Heart left ventricle (tissue), 16 donors: ENCODE measurements at regions of chr7 and their contacts with region 1.

Region 1: DNA sequence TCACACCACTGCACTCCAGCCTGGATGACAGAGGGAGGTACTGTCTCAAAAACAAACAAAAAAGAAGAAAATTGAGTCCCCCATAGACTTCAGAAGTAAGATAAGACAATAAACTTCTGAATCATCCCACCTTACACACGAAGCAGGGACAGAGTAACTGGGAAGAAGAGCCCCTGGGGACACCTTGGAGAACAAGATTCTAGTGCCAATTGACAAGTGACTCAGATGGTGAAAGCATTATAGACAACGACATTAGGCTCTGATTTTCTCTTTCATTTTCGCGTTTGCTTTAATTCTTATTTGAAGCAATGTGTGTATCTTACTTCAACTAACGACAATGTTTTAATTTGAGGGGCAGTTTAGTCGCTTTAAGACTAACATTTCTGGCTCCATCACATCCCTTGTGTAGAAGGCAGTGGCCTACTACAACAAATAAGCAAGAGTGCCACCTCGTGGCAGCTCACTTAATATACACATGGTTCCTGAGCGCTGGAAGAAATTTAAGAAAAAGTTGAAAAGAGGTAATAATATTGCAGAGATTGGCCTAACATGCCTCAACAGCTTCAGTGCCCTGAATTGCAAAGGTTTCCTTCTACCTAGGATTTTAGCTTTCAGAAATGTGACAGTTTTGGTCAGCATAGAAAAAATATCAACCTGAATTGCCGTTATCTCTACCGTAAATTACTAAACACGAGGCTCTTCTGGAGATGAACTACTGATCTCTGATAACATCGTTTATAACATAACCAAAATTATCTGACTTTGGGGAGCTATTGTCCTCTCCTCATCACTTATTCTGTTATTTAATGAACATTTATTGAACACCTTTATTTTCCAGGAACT is 36.7 kb downstream of the ASNS start:
- DNase-seq: peak in 4 of 5 donors; percentile 25 to 69 (median 46)
- ATAC-seq: peak in 3 of 4 donors; percentile 57 to 71 (median 61)
- H3K4me3 ChIP-seq: no peak overlapping the region
- H3K27ac ChIP-seq: no peak overlapping the region
- H3K4me1 ChIP-seq: no peaks in the 10 kb centered on the region
- H3K27me3 ChIP-seq: peaks cover 0 to 44% (median 4%) of the 10 kb centered on the region in 9 donors
- CTCF ChIP-seq: peak; percentile 48 to 74 (median 62)
- POLR2A ChIP-seq: no peak

Region 2: GRCh38 chr7:97104719-97105238 is 730.7 kb before region 1 on chr7:
- intact Hi-C with region 1: loop called in 9 of 10 experiments (anchors 1 to 5 kb)
- DNase-seq: peak; percentile 80 to 90 (median 83)
- ATAC-seq: peak; percentile 86 to 96 (median 96)
- H3K4me3 ChIP-seq: no peak overlapping the region
- H3K27ac ChIP-seq: no peak overlapping the region
- H3K4me1 ChIP-seq: peaks cover 0 to 7% (median 0%) of the 10 kb centered on the region in 12 donors
- H3K27me3 ChIP-seq: peaks cover 0 to 6% (median 0%) of the 10 kb centered on the region in 9 donors
- CTCF ChIP-seq: peak; percentile 69 to 88 (median 82)
- POLR2A ChIP-seq: no peak

Region 3: DNA sequence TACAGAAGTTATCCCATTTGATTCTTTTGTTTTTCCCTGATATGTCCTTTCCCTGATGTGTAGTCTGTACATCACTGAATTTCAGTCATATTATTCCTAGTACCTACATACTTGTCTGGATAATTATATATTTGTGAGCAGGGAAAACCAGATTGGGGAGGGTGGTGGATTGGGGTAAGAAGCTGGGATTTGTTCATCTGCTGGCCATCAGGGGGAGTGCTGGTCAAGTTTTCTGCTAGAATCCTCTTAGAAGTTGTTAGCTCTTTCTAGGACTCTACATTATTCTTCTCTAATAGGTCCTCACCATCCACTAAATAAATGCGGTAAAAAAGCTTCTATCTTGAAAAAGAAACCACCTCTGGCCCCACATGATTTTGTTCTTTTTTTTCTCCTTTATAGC is 336.3 kb before region 1 on chr7:
- intact Hi-C with region 1: loop called in 8 of 10 experiments (anchors 5 to 10 kb)
- DNase-seq: no peak
- ATAC-seq: no peak
- H3K4me3 ChIP-seq: no peak overlapping the region
- H3K27ac ChIP-seq: no peak overlapping the region
- H3K4me1 ChIP-seq: no peaks in the 10 kb centered on the region
- H3K27me3 ChIP-seq: no peaks in the 10 kb centered on the region
- CTCF ChIP-seq: peak in 11 of 12 donors; percentile 15 to 50 (median 30)
- POLR2A ChIP-seq: no peak